AG04450 (cell line): ENCODE measurements at regions of chr5 and their contacts with region 1.

Region 1: DNA sequence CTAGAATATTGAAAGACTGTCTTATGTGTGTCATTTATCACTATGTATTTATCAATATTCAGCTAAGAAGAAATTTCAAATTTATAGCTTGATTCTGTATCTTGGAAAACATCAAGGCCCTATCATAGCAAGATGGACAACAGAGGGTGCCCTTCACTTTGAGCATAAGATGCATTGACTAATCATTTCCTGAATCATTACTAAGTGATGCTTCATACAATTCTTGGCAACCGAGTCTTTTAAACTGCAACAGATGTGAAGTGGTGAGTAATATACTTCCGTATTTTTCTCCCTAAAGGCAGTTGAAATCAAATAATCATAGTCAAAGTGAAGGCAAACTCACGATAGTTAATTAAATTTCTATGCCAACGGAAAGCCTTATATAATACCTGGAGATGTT is 318.6 kb upstream of the RGMB start:
- DNase-seq: peak; percentile 78
- H3K4me3 ChIP-seq: no peak overlapping the region
- H3K27ac ChIP-seq: no peak overlapping the region
- H3K27me3 ChIP-seq: no peaks in the 10 kb centered on the region
- CTCF ChIP-seq: peak; percentile 50

Region 2: DNA sequence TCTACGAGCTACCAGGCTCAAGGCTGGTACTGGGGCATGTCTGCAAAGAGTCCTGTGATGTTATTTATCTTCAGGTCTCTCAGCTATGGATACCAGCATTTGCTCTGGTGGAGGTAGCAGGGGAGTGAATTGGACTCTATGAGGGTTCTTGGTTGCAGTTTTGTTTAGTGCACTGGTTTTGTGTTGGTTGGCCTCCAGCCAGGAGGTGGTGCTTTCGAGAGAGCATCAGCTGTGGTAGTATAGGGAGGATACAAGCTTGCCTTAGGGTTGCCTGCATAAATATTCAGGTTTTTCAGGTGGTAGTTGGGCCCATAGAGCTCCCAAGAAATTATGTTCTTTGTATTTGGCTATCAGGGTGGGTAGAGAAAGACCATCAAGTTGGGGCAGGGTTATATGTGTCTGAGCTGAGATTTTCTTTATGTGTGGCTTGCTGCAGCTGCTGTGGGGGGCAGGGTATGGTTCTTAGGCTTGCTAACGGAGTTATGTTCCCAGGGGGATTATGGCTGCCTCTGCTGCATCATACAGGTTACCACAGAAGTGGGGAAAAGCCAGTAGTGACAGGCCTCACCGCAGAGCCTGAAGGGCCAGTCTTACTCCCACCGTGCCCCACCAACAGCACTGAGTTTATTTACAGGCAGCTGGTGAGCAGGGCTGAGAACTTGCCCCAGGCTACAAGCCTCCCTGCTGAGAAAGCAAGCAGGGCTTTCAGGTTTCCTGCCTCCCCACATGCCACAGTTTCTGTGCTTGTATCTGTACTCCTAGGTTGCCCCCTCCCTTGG is 1262.1 kb before region 1 on chr5:
- CTCF ChIA-PET with region 1: no interaction called
- POLR2A ChIA-PET with region 1: interaction called, 10 read pairs
- DNase-seq: no peak
- H3K4me3 ChIP-seq: no peak overlapping the region
- H3K27ac ChIP-seq: no peak overlapping the region
- H3K27me3 ChIP-seq: no peaks in the 10 kb centered on the region
- CTCF ChIP-seq: no peak